Cardiac septum (tissue), 1 donor: ENCODE measurements at regions of chr19 and their contacts with region 1.

Region 1: GRCh38 chr19:9934132-9934950 is 2.0 kb downstream of the OLFM2 start:
- DNase-seq: no peak

Region 2: GRCh38 chr19:9906475-9907087 is 27.8 kb before region 1 on chr19:
- intact Hi-C with region 1: no loop called
- DNase-seq: no peak

Region 3: GRCh38 chr19:10006335-10006708 is 72.0 kb after region 1 on chr19:
- intact Hi-C with region 1: loop called (anchors 5 kb)
- DNase-seq: no peak

Region 4: GRCh38 chr19:10027158-10027693 is 92.9 kb after region 1 on chr19:
- intact Hi-C with region 1: loop called (anchors 2 kb)
- DNase-seq: no peak

Region 5: GRCh38 chr19:10037809-10038208 is 103.5 kb after region 1 on chr19:
- intact Hi-C with region 1: no loop called
- DNase-seq: no peak

Region 6: GRCh38 chr19:10112895-10113591 is 178.7 kb after region 1 on chr19:
- intact Hi-C with region 1: loop called (anchors 10 kb)
- DNase-seq: no peak

Region 7: DNA sequence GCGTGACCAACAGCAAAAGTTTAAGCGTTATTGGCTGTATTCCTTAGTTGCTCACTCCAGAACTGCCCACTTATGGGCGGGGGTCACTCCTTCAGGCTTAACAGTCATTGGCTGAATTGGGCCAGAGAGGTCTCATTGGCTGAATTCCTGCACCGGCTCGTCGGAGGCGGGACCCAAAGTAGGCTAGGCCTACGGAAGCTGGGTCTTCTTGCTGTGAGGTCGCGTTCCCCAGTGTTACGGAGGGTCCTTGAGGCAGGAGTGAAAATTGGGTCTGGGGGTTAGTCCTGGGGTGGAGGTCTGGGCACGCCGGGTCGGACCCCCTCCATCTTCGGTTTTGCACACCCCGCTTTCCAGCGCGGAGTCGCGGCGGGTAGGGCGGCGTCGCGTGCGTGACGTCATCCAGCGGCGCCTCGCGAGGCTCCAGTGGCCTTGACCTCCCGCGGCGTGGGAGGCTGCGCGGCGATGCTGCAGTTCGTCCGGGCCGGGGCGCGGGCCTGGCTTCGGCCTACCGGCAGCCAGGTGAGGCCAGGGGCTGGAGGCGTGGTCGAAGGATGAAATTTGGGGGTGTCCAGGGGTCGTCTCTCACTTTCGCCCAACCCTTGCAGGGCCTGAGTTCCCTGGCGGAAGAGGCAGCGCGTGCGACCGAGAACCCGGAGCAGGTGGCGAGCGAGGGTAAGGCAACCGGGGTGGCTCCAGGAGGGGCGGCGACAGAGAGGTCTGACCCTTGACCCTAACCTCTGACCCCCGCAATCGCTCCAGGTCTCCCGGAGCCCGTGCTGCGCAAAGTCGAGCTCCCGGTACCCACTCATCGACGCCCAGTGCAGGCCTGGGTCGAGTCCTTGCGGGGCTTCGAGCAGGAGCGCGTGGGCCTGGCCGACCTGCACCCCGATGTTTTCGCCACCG is 317.7 kb after region 1 on chr19 and contains the start of gene MRPL4:
- intact Hi-C with region 1: loop called (anchors 5 kb)
- DNase-seq: peak; percentile 98
- total RNA-seq, gene MRPL4: 71.8 TPM

Region 8: DNA sequence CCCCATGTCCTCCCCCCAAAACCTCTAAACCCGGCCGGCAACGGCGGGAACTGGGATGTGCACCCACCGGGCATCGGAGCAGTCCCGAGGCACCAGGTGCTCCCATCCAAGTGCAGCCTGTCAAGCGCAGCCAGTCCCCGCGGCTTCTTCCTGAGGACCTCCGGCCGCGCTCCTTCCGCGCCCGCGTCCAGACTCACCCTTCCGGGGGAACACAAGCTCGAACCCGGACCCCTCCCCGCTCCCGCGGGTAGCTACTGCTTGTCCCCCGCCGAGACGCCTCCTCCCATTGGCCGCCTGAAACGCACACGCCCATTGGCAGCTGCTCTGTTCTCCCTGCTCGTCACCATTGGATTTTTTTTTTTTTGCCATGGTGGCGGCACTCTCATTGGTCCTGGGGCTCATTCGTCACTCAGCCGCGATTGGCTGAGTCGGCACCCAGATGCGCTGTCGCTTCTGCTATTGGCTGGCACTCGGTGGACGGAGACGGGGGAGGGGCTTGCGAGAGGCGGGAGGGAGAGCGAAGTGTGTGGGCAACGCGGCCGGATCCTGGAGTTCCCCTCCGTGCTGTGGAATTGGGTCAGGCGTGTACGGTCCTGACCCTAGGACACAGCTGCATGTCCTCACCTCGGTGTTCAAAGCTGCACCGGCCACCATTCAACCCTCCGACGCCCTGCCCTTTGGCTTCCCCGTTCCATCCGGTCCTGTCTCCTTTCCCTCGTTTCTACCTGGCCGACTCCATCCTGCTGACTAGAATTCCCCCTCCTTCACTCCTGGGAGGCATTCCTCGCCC is 446.2 kb after region 1 on chr19 and contains the start of gene TYK2:
- intact Hi-C with region 1: loop called (anchors 10 kb)
- DNase-seq: peak; percentile 99
- total RNA-seq, gene TYK2: 66.2 TPM